CD8-positive, alpha-beta T cell (primary cell): ENCODE measurements at regions of chr9 and their contacts with region 1.

Region 1: DNA sequence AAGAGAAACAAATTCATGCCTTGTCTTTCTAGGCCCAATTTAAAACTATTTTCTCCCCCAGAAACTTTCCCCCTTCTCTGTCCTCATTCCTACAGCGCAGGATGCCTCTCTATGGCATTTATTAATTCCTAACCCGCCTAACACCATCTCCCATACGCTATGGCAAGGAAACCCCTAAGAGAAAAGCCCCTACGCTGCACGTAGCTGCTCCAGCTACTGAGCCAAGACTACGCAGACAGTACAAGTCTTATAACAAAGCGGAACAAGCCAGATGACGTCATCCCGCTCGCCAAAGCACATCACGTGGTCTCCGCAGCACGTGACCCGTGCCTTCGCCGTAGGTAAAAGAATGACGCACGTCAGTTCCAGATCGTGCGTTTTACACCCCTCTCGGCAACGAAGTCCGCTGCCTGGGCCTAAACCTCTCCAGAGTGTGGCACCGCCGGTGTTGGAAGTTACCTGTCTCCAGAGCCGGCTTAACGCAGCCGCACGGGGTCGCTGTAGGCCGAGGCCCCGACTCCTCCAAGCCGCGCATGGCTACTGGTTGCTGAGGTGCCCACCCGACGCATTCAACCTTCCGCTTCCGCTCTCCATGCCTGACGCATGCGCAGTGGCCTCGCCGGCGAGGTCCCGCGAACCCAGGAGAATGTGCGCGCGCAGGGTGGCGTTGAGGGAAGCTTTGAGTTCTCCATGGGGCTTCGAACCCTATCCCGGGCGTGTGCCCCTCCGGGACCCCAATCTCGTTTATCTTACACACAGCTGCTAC is at the start of gene TRMO:
- DNase-seq: peak; percentile 94 to 100 (median 99)
- ATAC-seq: peak; percentile 83
- H3K4me3 ChIP-seq: peak within 1 kb of the TSS; percentile 70 to 89
- H3K4me3 Mint-ChIP-seq: peak within 1 kb of the TSS; percentile 87
- H3K27ac ChIP-seq: peak within 1 kb of the TSS; percentile 97 to 100
- H3K27ac Mint-ChIP-seq: peak within 1 kb of the TSS; percentile 99
- H3K4me1 ChIP-seq: peaks cover 42% of the 10 kb centered on the region
- H3K4me1 Mint-ChIP-seq: peaks cover 52% of the 10 kb centered on the region
- H3K27me3 ChIP-seq: no peaks in the 10 kb centered on the region
- H3K27me3 Mint-ChIP-seq: no peaks in the 10 kb centered on the region
- CTCF ChIP-seq: peak; percentile 77
- total RNA-seq, gene TRMO: 45.7 to 50.6 TPM

Region 2: DNA sequence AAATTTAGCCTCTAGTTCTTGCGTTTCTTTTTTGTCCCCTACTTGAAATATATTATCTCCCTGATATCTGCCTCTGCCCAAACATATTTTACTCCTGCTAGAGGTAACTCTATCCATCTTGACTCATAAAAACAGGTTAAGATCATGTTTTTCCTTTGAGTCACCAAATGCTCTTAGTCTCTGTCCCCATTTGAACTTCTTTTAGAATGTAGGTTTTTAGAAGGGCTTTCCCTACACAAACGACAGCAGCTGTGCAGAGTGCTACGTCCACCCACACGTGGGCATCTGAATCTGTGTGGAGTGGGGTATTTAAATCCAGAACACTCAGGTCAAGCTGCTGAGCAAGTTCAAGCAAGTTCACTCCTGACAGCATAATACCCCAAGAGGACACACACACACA is 1622.3 kb before region 1 on chr9:
- CTCF ChIA-PET with region 1: no interaction called
- POLR2A ChIA-PET with region 1: no interaction called
- intact Hi-C with region 1: no loop called
- DNase-seq: no peak
- ATAC-seq: no peak
- H3K4me3 ChIP-seq: no peak overlapping the region
- H3K4me3 Mint-ChIP-seq: no peak overlapping the region
- H3K27ac ChIP-seq: no peak overlapping the region
- H3K27ac Mint-ChIP-seq: no peak overlapping the region
- H3K4me1 ChIP-seq: no peaks in the 10 kb centered on the region
- H3K4me1 Mint-ChIP-seq: no peaks in the 10 kb centered on the region
- H3K27me3 ChIP-seq: no peaks in the 10 kb centered on the region
- H3K27me3 Mint-ChIP-seq: peaks cover 5% of the 10 kb centered on the region
- CTCF ChIP-seq: no peak

Region 3: GRCh38 chr9:97632985-97633858 is 288.9 kb before region 1 on chr9 and contains the starts of genes NCBP1 and TSTD2:
- CTCF ChIA-PET with region 1: interaction called, 3 read pairs
- POLR2A ChIA-PET with region 1: interaction called, 12 read pairs
- intact Hi-C with region 1: loop called (anchors 1 kb)
- DNase-seq: peak; percentile 89 to 98 (median 95)
- ATAC-seq: peak; percentile 86
- H3K4me3 ChIP-seq: peak within 1 kb of the TSS; percentile 96 to 97
- H3K4me3 Mint-ChIP-seq: peak within 1 kb of the TSS; percentile 96
- H3K27ac ChIP-seq: peak within 1 kb of the TSS; percentile 88 to 97
- H3K27ac Mint-ChIP-seq: peak within 1 kb of the TSS; percentile 99
- H3K4me1 ChIP-seq: peaks cover 45% of the 10 kb centered on the region
- H3K4me1 Mint-ChIP-seq: peaks cover 57% of the 10 kb centered on the region
- H3K27me3 ChIP-seq: no peaks in the 10 kb centered on the region
- H3K27me3 Mint-ChIP-seq: no peaks in the 10 kb centered on the region
- CTCF ChIP-seq: no peak
- total RNA-seq, gene NCBP1: 50.7 to 58.5 TPM
- total RNA-seq, gene TSTD2: 34.3 to 40.8 TPM

Region 4: GRCh38 chr9:97900738-97901565 is 21.2 kb before region 1 on chr9:
- CTCF ChIA-PET with region 1: interaction called, 196 read pairs
- POLR2A ChIA-PET with region 1: interaction called, 83 read pairs
- intact Hi-C with region 1: loop called (anchors 1 kb)
- DNase-seq: peak in 3 of 9 experiments; percentile 28 to 79 (median 67)
- ATAC-seq: no peak
- H3K4me3 ChIP-seq: no peak overlapping the region
- H3K4me3 Mint-ChIP-seq: no peak overlapping the region
- H3K27ac ChIP-seq: peak overlapping the region in 1 of 2 experiments; percentile 17
- H3K27ac Mint-ChIP-seq: peak overlapping the region; percentile 82
- H3K4me1 ChIP-seq: peaks cover 53% of the 10 kb centered on the region
- H3K4me1 Mint-ChIP-seq: peaks cover 53% of the 10 kb centered on the region
- H3K27me3 ChIP-seq: no peaks in the 10 kb centered on the region
- H3K27me3 Mint-ChIP-seq: no peaks in the 10 kb centered on the region
- CTCF ChIP-seq: peak; percentile 75

Region 5: DNA sequence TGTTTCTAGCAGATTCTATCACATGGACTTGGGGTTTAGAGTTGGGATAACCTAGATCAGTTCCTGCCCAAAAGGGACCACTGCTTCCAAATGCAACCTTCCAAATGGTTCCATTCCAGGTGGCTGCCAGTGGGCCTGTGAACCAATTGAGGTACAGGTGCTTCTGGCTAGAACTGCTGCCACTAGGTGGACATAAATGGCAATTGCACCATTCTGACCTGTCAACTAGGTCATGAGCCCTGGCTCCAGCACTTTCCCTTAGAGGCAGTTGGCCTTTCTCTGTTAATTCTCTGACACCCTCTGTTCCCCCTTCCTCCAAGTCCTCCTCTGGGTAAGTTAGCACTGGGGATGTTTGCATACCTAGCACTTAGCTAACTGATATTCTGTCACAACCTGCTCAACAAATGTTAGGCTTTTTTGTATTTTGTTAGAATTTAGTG is 32.4 kb after region 1 on chr9:
- CTCF ChIA-PET with region 1: interaction called, 112 read pairs
- POLR2A ChIA-PET with region 1: interaction called, 12 read pairs
- intact Hi-C with region 1: loop called (anchors 1 kb)
- DNase-seq: peak; percentile 14 to 82 (median 59)
- ATAC-seq: peak; percentile 96
- H3K4me3 ChIP-seq: no peak overlapping the region
- H3K4me3 Mint-ChIP-seq: no peak overlapping the region
- H3K27ac ChIP-seq: no peak overlapping the region
- H3K27ac Mint-ChIP-seq: no peak overlapping the region
- H3K4me1 ChIP-seq: no peaks in the 10 kb centered on the region
- H3K4me1 Mint-ChIP-seq: peaks cover 6% of the 10 kb centered on the region
- H3K27me3 ChIP-seq: no peaks in the 10 kb centered on the region
- H3K27me3 Mint-ChIP-seq: no peaks in the 10 kb centered on the region
- CTCF ChIP-seq: peak; percentile 73

Region 6: DNA sequence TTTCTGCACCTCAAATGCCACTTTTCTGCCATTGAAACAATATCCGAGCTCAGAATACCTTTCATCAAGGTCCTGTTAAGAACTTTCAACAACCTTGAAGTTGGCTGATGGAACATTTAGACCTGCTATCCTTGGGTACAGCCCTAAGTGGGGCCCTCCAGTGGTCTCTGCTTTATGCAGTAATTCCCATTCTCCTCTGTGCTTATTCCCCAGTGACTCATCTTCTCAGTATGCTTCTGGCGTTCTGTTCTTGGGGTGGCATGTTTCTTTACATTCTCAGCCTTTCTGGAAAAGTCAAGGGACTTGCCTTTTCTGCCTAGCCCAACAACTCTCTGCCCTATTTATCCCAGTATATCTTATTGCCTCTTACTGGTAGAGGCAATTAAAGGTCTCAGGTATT is 68.1 kb after region 1 on chr9:
- CTCF ChIA-PET with region 1: interaction called, 32 read pairs
- POLR2A ChIA-PET with region 1: interaction called, 121 read pairs
- intact Hi-C with region 1: no loop called
- DNase-seq: peak in 1 of 9 experiments; percentile 27
- ATAC-seq: no peak
- H3K4me3 ChIP-seq: no peak overlapping the region
- H3K4me3 Mint-ChIP-seq: no peak overlapping the region
- H3K27ac ChIP-seq: peak overlapping the region in 1 of 2 experiments; percentile 32
- H3K27ac Mint-ChIP-seq: peak overlapping the region; percentile 45
- H3K4me1 ChIP-seq: peaks cover 79% of the 10 kb centered on the region
- H3K4me1 Mint-ChIP-seq: peaks cover 87% of the 10 kb centered on the region
- H3K27me3 ChIP-seq: no peaks in the 10 kb centered on the region
- H3K27me3 Mint-ChIP-seq: no peaks in the 10 kb centered on the region
- CTCF ChIP-seq: no peak

Region 7: DNA sequence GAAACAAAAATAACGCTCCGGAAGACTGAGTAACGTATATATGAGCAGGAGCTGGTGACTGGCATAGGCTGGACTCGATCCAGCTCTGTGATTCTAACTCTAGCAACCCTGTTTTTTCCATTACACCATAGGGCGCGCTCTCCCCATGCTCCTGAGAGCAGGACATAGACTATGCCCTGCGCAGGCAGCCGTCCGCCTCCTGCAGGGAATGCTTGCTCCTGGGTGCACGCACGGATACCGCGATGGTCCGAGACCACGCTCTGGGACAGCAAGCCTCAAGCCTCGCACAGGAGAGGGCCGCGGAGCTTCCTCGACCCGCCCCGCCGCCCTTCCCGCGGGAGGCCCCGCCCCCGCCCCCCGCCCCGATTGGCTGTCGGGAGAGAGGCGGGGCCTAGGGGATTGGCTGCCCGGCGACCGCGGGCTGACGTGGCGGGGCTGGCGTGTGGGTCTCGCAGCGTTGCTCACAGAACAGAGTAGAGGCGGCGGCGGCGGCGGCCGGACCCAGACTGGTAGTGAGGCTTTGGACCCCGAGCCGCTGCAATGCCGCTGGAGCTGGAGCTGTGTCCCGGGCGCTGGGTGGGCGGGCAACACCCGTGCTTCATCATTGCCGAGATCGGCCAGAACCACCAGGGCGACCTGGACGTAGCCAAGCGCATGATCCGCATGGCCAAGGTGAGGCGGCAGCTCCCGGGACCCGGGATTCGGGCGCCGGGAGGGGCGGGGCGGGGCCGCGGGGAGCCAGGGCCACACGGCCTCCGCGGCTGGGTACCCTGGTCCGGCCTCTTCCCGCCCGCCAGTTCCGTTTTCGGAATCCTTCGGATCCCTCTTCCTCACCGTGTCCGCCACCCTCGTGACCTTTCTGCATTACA is 134.4 kb after region 1 on chr9 and contains the start of gene NANS:
- CTCF ChIA-PET with region 1: interaction called, 8 read pairs
- POLR2A ChIA-PET with region 1: interaction called, 24 read pairs
- intact Hi-C with region 1: loop called (anchors 1 to 2 kb)
- DNase-seq: peak; percentile 78 to 93 (median 93)
- ATAC-seq: peak; percentile 94
- H3K4me3 ChIP-seq: peak within 1 kb of the TSS; percentile 58 to 83
- H3K4me3 Mint-ChIP-seq: peak within 1 kb of the TSS; percentile 96
- H3K27ac ChIP-seq: peak within 1 kb of the TSS; percentile 81 to 83
- H3K27ac Mint-ChIP-seq: peak within 1 kb of the TSS; percentile 97
- H3K4me1 ChIP-seq: peaks cover 21% of the 10 kb centered on the region
- H3K4me1 Mint-ChIP-seq: peaks cover 24% of the 10 kb centered on the region
- H3K27me3 ChIP-seq: no peaks in the 10 kb centered on the region
- H3K27me3 Mint-ChIP-seq: no peaks in the 10 kb centered on the region
- CTCF ChIP-seq: no peak
- total RNA-seq, gene NANS: 84.6 to 92.5 TPM

Region 8: GRCh38 chr9:98263482-98264357 is 341.6 kb after region 1 on chr9:
- CTCF ChIA-PET with region 1: interaction called, 5 read pairs
- POLR2A ChIA-PET with region 1: no interaction called
- intact Hi-C with region 1: loop called (anchors 1 kb)
- DNase-seq: peak; percentile 70 to 87 (median 84)
- ATAC-seq: peak; percentile 100
- H3K4me3 ChIP-seq: no peak overlapping the region
- H3K4me3 Mint-ChIP-seq: no peak overlapping the region
- H3K27ac ChIP-seq: no peak overlapping the region
- H3K27ac Mint-ChIP-seq: no peak overlapping the region
- H3K4me1 ChIP-seq: no peaks in the 10 kb centered on the region
- H3K4me1 Mint-ChIP-seq: peaks cover 2% of the 10 kb centered on the region
- H3K27me3 ChIP-seq: no peaks in the 10 kb centered on the region
- H3K27me3 Mint-ChIP-seq: no peaks in the 10 kb centered on the region
- CTCF ChIP-seq: peak; percentile 92

Region 9: DNA sequence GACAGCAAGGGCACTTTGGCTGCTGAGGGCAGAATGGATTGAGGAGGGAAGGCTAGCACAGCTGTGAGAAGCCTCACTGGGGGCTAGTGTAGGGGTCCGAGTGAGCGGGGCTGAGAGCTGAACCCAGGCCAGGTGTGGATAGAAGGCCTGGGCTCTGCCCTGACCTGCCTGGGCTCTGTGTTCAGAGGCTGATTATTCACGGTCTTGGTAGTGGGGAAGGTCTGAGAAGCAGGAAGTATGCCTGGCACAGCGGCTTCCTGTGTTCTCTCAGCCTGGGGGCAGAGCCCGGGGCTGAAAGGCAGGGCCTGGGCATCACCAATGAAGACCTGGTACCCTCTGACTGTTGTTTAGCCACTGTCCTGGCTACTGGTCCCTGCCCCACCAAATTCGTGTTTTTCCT is 469.7 kb after region 1 on chr9:
- CTCF ChIA-PET with region 1: no interaction called
- POLR2A ChIA-PET with region 1: no interaction called
- intact Hi-C with region 1: no loop called
- DNase-seq: peak in 1 of 9 experiments; percentile 18
- ATAC-seq: no peak
- H3K4me3 ChIP-seq: no peak overlapping the region
- H3K4me3 Mint-ChIP-seq: no peak overlapping the region
- H3K27ac ChIP-seq: no peak overlapping the region
- H3K27ac Mint-ChIP-seq: peak overlapping the region; percentile 41
- H3K4me1 ChIP-seq: peaks cover 10% of the 10 kb centered on the region
- H3K4me1 Mint-ChIP-seq: peaks cover 15% of the 10 kb centered on the region
- H3K27me3 ChIP-seq: no peaks in the 10 kb centered on the region
- H3K27me3 Mint-ChIP-seq: peaks cover 9% of the 10 kb centered on the region
- CTCF ChIP-seq: no peak